Esophagus muscularis mucosa (tissue), 4 donors: ENCODE measurements at regions of chr1 and their contacts with region 1.

Region 1: DNA sequence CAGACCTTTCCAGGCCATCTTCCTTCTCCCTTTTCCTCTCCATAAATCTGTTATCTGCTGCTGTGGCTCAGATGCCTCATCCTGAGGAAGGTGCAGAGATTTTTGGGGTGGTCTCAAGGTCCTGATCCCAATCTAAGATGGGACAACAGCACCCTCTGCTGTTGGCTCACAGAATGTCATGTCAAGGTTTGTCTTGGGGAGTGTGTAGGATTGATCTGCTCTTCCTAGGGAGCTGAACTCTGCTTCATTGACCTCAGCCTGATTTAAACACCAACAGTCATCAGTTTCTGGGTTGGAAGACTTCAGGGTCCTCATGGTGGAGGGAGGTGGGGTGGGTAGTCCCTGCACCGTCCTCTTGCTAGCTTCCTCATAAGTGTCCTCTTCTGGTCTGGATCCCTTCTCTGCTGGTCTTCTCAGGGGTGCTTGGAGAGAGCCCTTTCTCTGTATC is 62.8 kb upstream of the LAX1 start:
- DNase-seq: no peak
- H3K4me3 ChIP-seq: no peak overlapping the region
- H3K27ac ChIP-seq: peak overlapping the region; percentile 63 to 91 (median 86)
- H3K4me1 ChIP-seq: peaks cover 5 to 67% (median 46%) of the 10 kb centered on the region in 4 donors
- H3K27me3 ChIP-seq: no peaks in the 10 kb centered on the region
- CTCF ChIP-seq: peak; percentile 77 to 93 (median 79)
- EP300 ChIP-seq: no peak
- POLR2A ChIP-seq: no peak

Region 2: DNA sequence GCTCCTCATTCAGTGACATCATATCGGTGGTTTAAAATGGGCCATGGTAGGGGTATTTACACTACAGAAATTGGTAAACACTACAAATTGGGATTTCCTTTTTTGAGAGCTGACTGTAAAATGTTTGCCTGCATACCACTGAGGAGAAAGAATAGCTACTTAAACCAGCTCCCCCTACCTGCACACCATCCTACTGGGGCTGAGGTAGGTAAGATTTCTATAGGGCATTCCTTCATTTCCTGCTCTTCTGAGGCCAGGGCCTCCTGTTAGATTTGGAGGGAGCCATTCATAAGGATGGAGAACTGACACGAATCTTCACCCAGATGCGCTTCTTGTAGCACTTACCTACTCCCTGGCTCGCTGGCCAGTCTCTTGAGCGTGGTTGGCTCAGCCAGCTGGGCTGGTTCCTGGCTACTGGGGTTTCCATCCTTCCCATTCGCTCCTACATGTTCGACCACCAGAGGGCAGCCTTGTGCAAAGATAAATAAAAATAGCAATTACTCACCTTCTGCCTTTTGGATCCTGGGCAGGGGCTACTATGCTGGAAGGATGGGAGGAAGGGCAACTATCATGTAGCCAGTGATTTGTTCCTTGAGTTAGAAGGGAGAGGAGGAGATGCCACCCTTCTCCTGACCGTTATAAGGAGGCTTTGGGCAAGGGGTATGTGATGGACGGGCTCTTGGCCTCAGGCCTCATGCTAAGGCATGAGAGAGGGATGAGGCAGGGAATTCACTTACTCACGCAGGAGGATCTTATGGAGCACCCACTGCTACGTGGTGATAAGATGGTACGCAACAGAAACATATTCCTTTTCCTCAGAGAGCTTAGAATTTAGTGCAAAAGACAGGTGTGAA is 197.5 kb before region 1 on chr1:
- intact Hi-C with region 1: loop called (anchors 1 kb)
- DNase-seq: peak; percentile 96
- H3K4me3 ChIP-seq: no peak overlapping the region
- H3K27ac ChIP-seq: peak overlapping the region in 3 of 4 donors; percentile 79 to 88 (median 88)
- H3K4me1 ChIP-seq: peaks cover 35 to 68% (median 60%) of the 10 kb centered on the region in 4 donors
- H3K27me3 ChIP-seq: no peaks in the 10 kb centered on the region
- CTCF ChIP-seq: peak; percentile 90 to 93 (median 93)
- EP300 ChIP-seq: no peak
- POLR2A ChIP-seq: no peak

Region 3: GRCh38 chr1:203556047-203556851 is 145.9 kb before region 1 on chr1:
- intact Hi-C with region 1: no loop called
- DNase-seq: no peak
- H3K4me3 ChIP-seq: peak overlapping the region in 1 of 4 donors; percentile 10
- H3K27ac ChIP-seq: peak overlapping the region; percentile 85 to 94 (median 91)
- H3K4me1 ChIP-seq: peaks cover 59 to 74% (median 67%) of the 10 kb centered on the region in 4 donors
- H3K27me3 ChIP-seq: no peaks in the 10 kb centered on the region
- CTCF ChIP-seq: no peak
- EP300 ChIP-seq: no peak
- POLR2A ChIP-seq: no peak

Region 4: DNA sequence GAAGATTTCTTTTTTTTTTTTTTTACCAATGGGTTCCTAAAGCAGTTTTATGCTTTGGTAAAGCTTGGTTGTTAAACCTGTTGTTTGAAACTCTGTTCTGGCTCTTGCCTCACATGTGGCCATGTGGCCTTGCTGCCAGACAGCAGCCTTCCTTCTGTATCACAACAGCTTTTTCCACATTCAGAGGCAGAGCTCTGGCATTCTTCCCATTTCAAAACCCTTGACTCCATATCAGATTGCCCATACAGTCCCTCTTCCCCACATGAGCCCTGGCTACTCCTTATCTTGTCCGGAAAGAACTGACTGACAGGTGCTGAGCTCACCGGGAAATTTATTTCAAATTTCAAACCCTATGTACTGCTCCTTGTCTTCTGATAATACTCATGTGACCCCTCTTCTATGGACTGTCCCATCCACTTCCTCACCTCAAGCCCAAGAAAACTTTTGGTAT is 24.3 kb after region 1 on chr1:
- intact Hi-C with region 1: no loop called
- DNase-seq: no peak
- H3K4me3 ChIP-seq: no peak overlapping the region
- H3K27ac ChIP-seq: peak overlapping the region in 1 of 4 donors; percentile 3
- H3K4me1 ChIP-seq: no peaks in the 10 kb centered on the region
- H3K27me3 ChIP-seq: no peaks in the 10 kb centered on the region
- CTCF ChIP-seq: no peak
- EP300 ChIP-seq: no peak
- POLR2A ChIP-seq: no peak

Region 5: GRCh38 chr1:203807196-203807595 is 105.0 kb after region 1 on chr1:
- intact Hi-C with region 1: no loop called
- DNase-seq: peak; percentile 64
- H3K4me3 ChIP-seq: no peak overlapping the region
- H3K27ac ChIP-seq: peak overlapping the region in 1 of 4 donors; percentile 36
- H3K4me1 ChIP-seq: peaks cover 0 to 36% (median 33%) of the 10 kb centered on the region in 4 donors
- H3K27me3 ChIP-seq: no peaks in the 10 kb centered on the region
- CTCF ChIP-seq: no peak
- EP300 ChIP-seq: no peak
- POLR2A ChIP-seq: no peak

Region 6: GRCh38 chr1:204711947-204712701 is 1010.0 kb after region 1 on chr1:
- intact Hi-C with region 1: no loop called
- DNase-seq: no peak
- H3K4me3 ChIP-seq: no peak overlapping the region
- H3K27ac ChIP-seq: no peak overlapping the region
- H3K4me1 ChIP-seq: peaks cover 4 to 8% (median 7%) of the 10 kb centered on the region in 4 donors
- H3K27me3 ChIP-seq: peaks cover 0 to 35% (median 7%) of the 10 kb centered on the region in 4 donors
- CTCF ChIP-seq: no peak
- EP300 ChIP-seq: no peak
- POLR2A ChIP-seq: no peak